ENCODE measurements at regions of chr6 and their contacts with region 1.

Region 1: GRCh38 chr6:154488802-154489437 is 21.6 kb downstream of the CNKSR3 start:
- DNase-seq: no peak
- ATAC-seq: no peak
- H3K4me3 ChIP-seq: no peak overlapping the region
- H3K27ac ChIP-seq: peak overlapping the region; percentile 57 to 85
- H3K4me1 ChIP-seq: peaks cover 7 to 19% of the 10 kb centered on the region in 2 donors
- H3K27me3 ChIP-seq: no peaks in the 10 kb centered on the region

Region 2: DNA sequence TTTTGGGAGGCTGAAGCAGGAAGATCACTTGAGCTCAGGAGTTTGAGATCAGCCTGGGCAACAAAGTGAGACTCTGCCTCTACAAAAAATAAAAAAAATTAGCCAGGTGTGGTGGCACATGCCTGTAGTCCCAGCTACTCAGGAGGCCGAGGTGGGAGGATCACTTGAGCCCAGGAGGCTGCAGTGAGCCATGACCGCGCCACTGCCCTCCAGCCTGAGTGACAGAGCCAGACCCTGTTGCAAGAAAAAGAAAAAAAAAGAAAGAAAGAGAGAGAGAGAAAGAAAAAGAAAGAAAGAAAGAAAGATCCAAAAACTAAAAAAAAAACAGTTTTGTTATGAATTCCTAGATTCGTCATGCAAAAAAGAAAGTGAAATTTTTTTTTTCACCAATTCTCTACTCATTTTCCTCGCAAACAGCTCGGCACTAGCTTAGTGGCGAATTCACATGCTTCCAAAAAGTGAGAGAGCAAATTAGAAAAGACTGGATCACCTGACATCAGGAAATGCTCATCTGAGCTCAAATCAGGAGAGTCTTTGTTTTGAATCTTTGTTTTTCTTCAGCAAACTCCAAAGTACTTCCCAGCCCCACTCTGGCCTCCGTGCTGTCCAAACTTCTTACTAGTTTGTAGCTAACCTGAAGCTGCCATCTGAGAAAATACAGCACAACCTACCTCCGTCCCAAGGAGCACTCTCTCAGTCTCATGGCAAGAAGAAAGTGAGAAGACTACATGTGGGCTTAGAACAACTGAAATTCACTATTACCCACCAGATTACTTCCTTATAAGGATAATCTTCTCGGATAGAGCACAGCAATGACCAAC is 159.4 kb before region 1 on chr6:
- intact Hi-C with region 1: no loop called
- DNase-seq: no peak
- ATAC-seq: no peak
- H3K4me3 ChIP-seq: peak overlapping the region; percentile 8 to 34
- H3K27ac ChIP-seq: no peak overlapping the region
- H3K4me1 ChIP-seq: no peaks in the 10 kb centered on the region
- H3K27me3 ChIP-seq: no peaks in the 10 kb centered on the region

Region 3: DNA sequence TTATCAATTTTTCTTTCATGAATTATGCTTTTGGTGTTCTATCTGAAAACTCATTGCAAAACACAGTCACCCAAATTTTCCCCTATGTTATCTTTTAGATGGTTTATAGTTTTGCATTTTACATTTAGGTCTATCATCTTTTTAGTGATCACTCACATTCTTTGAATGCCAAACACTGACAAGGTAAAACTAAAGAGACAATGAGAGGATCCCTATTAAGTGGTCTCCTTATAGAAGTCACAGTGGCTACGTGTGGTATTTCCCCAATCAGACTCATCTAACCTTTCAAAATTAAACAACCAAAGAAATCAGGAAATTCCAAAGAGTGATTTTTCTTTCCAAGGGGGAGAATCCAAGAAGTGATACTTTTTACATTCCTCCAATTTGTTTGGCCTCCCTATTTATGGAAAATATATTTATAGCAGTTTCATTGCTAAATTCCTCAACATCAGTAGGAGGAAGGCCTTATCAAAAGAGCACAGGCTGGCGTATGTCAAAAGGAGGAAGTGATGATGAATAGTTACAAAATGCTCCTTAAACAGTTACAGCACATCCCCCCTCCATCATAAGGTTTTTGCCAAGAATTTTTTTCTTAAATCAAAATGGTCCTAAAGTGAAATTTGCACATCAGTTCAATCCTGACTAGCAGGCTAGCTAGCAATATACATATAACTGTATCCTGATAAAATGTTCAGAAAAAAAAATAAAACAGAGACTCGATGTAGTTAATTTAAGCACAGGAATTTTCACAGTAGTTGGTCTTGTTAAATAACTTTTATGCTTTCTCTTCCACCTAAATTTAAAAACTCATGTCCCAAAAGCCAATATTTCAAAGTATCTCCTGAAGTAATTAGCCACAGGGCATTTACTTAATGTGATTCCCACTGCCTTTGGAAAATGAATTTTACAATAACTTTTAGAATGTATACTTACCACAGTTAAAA is 56.1 kb before region 1 on chr6:
- intact Hi-C with region 1: loop called in 1 of 2 experiments (anchors 1 kb)
- DNase-seq: no peak
- ATAC-seq: no peak
- H3K4me3 ChIP-seq: no peak overlapping the region
- H3K27ac ChIP-seq: peak overlapping the region in 1 of 2 donors; percentile 78
- H3K4me1 ChIP-seq: peaks cover 2 to 11% of the 10 kb centered on the region in 2 donors
- H3K27me3 ChIP-seq: no peaks in the 10 kb centered on the region

Region 4: GRCh38 chr6:154448448-154449096 is 40.3 kb before region 1 on chr6:
- intact Hi-C with region 1: loop called in 1 of 2 experiments (anchors 5 kb)
- DNase-seq: peak in 1 of 2 donors; percentile 55
- ATAC-seq: peak; percentile 65
- H3K4me3 ChIP-seq: no peak overlapping the region
- H3K27ac ChIP-seq: peak overlapping the region in 1 of 2 donors; percentile 59
- H3K4me1 ChIP-seq: peaks cover 0 to 12% of the 10 kb centered on the region in 2 donors
- H3K27me3 ChIP-seq: no peaks in the 10 kb centered on the region